SK-N-SH (cell line): ENCODE measurements at regions of chr20 and their contacts with region 1.

Region 1: DNA sequence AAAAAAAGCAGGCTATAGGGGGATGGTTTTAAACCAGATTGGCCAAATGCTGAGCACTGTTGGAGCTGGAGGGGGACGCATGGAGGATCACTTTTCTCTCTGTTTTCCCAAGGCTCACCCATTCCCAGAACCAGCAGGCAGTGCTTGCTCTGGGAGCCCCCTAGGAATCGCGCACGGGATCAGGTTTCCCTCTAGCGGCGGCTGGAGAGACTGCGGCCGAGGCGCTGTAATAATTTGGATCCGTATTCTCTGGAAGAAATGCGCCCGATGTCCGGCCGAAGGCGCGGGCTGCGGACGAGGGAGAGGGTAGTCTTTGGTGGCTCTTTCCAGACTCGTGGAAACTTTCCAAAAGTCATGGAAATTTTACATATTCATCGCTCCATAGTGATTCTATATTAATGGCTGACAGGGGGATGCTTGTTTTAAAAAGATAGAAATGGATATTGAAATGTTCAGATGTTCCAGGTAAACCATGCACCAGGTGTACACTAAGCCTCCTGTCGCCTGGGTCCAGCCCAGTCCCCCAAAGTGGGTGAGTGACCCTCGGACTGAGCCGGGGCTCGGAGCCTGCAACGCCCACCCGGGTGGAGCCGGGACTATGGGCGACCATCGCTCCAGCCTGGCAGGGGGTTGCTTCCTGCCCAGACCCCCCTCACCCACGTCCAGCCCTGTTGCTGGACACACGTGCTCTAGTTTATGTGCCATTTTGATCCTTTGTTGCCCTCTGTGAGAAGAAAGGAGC is 78.7 kb upstream of the PHACTR3 start:
- DNase-seq: peak; percentile 83
- H3K4me3 ChIP-seq: peak overlapping the region in 1 of 2 experiments; percentile 14; a peak in 2 of 4 replicates
- H3K27ac ChIP-seq: no peak overlapping the region
- H3K4me1 ChIP-seq: peaks cover 0 to 9% of the 10 kb centered on the region in 2 experiments; a peak in 1 of 4 replicates
- H3K27me3 ChIP-seq: no peaks in the 10 kb centered on the region
- CTCF ChIP-seq: peak; percentile 82
- EP300 ChIP-seq: no peak
- RAD21 ChIP-seq: peak; percentile 79

Region 2: GRCh38 chr20:59512651-59513050 is 13.0 kb before region 1 on chr20:
- CTCF ChIA-PET with region 1: interaction called, 155 read pairs
- POLR2A ChIA-PET with region 1: interaction called, 3 read pairs
- DNase-seq: no peak
- H3K4me3 ChIP-seq: no peak overlapping the region
- H3K27ac ChIP-seq: no peak overlapping the region
- H3K4me1 ChIP-seq: peaks cover 0 to 4% of the 10 kb centered on the region in 2 experiments; a peak in 1 of 4 replicates
- H3K27me3 ChIP-seq: no peaks in the 10 kb centered on the region
- CTCF ChIP-seq: no peak
- EP300 ChIP-seq: no peak
- RAD21 ChIP-seq: no peak

Region 3: GRCh38 chr20:59547596-59547995 is 21.9 kb after region 1 on chr20:
- CTCF ChIA-PET with region 1: interaction called, 10 read pairs
- POLR2A ChIA-PET with region 1: no interaction called
- DNase-seq: no peak
- H3K4me3 ChIP-seq: no peak overlapping the region
- H3K27ac ChIP-seq: no peak overlapping the region
- H3K4me1 ChIP-seq: no peaks in the 10 kb centered on the region
- H3K27me3 ChIP-seq: no peaks in the 10 kb centered on the region
- CTCF ChIP-seq: no peak
- EP300 ChIP-seq: no peak
- RAD21 ChIP-seq: no peak

Region 4: GRCh38 chr20:59560588-59561227 is 35.0 kb after region 1 on chr20:
- CTCF ChIA-PET with region 1: interaction called, 21 read pairs
- POLR2A ChIA-PET with region 1: no interaction called
- DNase-seq: peak; percentile 76
- H3K4me3 ChIP-seq: no peak overlapping the region
- H3K27ac ChIP-seq: no peak overlapping the region
- H3K4me1 ChIP-seq: peaks cover 0 to 7% of the 10 kb centered on the region in 2 experiments; a peak in 1 of 4 replicates
- H3K27me3 ChIP-seq: no peaks in the 10 kb centered on the region
- CTCF ChIP-seq: peak; percentile 64
- EP300 ChIP-seq: no peak
- RAD21 ChIP-seq: peak; percentile 20; the same call in 1 of the 2 replicates